ENCODE measurements at regions of chr11 and their contacts with region 1.

Region 1: DNA sequence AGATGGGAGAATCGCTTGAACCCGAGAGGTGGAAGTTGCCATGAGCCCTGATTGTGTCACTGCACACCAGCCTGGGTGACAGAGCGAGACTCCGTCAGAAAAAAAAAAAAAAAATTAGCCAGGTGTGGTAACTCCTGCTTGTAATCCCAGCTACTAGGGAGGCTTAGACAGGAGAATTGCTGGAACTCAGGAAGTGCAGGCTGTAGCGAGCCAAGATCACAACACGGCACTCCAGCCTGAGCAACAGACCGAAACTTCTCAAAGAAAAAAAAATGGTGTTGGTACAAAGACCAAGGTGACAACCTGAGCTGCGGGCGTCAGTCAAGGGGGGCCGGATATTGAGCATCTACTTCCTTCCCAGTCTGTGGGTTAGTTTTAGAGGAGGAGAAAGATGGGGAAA is 48.4 kb upstream of the HSPA8 start:
- DNase-seq: no peak
- H3K4me3 ChIP-seq: no peak overlapping the region
- H3K27ac ChIP-seq: no peak overlapping the region
- H3K4me1 ChIP-seq: peaks cover 6% of the 10 kb centered on the region; the same call in 1 of the 2 replicates
- H3K27me3 ChIP-seq: no peaks in the 10 kb centered on the region
- CTCF ChIP-seq: no peak

Region 2: GRCh38 chr11:122814401-122814800 is 296.0 kb before region 1 on chr11:
- CTCF ChIA-PET with region 1: no interaction called
- POLR2A ChIA-PET with region 1: no interaction called
- intact Hi-C with region 1: no loop called
- DNase-seq: no peak
- H3K4me3 ChIP-seq: no peak overlapping the region
- H3K27ac ChIP-seq: peak overlapping the region; percentile 97
- H3K4me1 ChIP-seq: peaks cover 38% of the 10 kb centered on the region
- H3K27me3 ChIP-seq: no peaks in the 10 kb centered on the region
- CTCF ChIP-seq: peak; percentile 36; the same call in 1 of the 2 replicates

Region 3: DNA sequence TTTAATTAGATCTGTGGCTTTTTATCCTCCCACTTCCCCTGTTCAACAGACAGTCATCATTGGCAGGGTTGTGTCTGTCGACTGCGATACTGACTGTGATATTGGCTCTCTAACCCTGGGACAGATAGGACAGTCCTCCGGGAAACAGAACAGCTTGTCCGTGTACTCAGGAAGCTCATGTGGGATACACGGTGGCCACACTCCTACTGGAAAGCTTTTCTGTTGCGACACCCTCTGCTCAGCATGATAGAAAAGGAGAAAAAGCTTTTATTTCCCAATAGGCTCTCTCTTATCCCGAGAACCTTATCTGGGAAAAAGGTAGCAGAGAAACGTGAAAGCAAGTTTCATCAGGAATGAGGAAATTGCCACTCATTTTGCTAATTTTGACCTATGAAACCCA is 12.0 kb after region 1 on chr11:
- CTCF ChIA-PET with region 1: no interaction called
- POLR2A ChIA-PET with region 1: no interaction called
- intact Hi-C with region 1: no loop called
- DNase-seq: peak in 1 of 2 experiments; percentile 82
- H3K4me3 ChIP-seq: no peak overlapping the region; the same call in 1 of the 2 replicates
- H3K27ac ChIP-seq: peak overlapping the region; percentile 92
- H3K4me1 ChIP-seq: peaks cover 48% of the 10 kb centered on the region
- H3K27me3 ChIP-seq: no peaks in the 10 kb centered on the region
- CTCF ChIP-seq: no peak

Region 4: DNA sequence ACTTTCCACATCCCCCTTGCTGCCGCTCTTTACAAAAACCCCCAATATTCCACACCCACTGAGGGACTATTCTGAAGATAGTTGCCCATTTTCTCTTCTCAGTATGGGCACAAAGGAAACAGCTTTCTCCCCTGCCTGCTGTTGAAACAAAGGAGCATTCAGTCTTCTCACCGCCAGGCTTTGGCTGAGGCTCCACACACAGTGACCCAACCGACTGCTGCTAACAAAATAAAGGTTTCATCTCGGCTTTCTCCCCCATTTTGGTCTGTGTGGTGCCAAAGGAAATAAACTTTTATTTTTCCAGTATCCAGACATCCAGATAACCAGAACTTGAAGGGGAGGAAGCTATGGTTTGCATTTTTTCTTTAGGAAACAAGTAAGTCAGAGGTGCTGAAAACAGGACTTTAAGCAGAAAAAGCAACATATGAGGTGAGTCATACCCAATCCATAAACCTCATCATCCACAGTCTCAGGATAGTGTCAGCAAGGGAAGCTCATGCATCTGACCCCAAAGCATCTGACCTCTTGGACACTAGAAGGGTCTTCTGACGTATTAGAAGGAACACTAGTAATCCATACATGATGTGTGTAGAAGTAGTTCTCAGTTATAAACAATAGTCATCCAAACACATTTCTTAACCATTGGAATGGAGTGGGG is 78.3 kb after region 1 on chr11:
- CTCF ChIA-PET with region 1: no interaction called
- POLR2A ChIA-PET with region 1: no interaction called
- intact Hi-C with region 1: loop called (anchors 10 kb)
- DNase-seq: no peak
- H3K4me3 ChIP-seq: no peak overlapping the region
- H3K27ac ChIP-seq: peak overlapping the region; percentile 40
- H3K4me1 ChIP-seq: peaks cover 71% of the 10 kb centered on the region
- H3K27me3 ChIP-seq: no peaks in the 10 kb centered on the region
- CTCF ChIP-seq: no peak

Region 5: GRCh38 chr11:123246749-123247495 is 136.6 kb after region 1 on chr11:
- CTCF ChIA-PET with region 1: interaction called, 15 read pairs
- POLR2A ChIA-PET with region 1: no interaction called
- intact Hi-C with region 1: loop called (anchors 1 kb)
- DNase-seq: peak; percentile 54 to 80
- H3K4me3 ChIP-seq: no peak overlapping the region
- H3K27ac ChIP-seq: no peak overlapping the region
- H3K4me1 ChIP-seq: peaks cover 16% of the 10 kb centered on the region
- H3K27me3 ChIP-seq: no peaks in the 10 kb centered on the region
- CTCF ChIP-seq: peak; percentile 94

Region 6: DNA sequence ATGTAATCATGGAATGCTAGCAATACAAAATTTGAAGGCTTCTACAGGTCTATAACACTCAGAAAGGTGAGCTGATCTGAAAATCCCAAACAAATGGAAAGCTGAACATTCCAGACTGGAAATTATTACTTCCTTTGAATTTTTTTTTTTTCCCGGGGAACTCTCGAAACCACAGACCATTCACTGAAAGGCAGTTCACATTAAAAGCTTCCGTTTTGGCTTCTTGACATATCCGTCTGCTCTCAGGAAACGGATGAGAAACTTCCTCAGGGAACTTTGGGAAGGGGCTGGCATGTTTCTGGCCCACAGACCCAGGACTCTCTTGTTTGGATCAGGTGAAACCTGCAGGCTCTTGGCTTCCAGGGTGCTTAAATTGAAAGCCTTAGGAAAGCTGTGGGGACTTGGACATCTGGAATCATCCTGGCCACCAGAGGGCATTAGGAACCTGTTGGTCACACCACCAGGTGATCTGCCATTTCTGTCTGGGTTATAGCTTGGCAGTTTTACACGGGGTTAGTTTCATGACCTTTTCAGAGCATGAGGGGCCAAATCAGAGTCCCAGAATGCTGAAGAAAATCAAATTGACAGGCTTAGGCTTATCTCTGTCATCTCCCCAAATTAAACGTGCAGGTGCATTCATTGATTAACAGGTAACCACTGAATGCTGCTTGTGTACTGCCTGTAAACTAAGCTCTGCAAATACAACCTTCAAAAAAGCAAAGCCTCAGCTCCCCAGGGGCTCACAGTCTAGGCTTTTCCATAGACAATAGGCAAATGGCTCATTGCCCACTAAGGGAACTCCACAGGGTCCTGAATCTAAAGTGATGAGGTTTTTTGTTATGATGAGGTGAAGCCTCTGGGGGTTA is 297.0 kb after region 1 on chr11:
- CTCF ChIA-PET with region 1: no interaction called
- POLR2A ChIA-PET with region 1: no interaction called
- intact Hi-C with region 1: loop called (anchors 2 kb)
- DNase-seq: peak; percentile 55 to 60
- H3K4me3 ChIP-seq: no peak overlapping the region
- H3K27ac ChIP-seq: no peak overlapping the region
- H3K4me1 ChIP-seq: no peaks in the 10 kb centered on the region
- H3K27me3 ChIP-seq: no peaks in the 10 kb centered on the region
- CTCF ChIP-seq: peak; percentile 88

Measured in PC-9 (cell line).